ENCODE measurements at regions of chr18 and their contacts with region 1.

Region 1: DNA sequence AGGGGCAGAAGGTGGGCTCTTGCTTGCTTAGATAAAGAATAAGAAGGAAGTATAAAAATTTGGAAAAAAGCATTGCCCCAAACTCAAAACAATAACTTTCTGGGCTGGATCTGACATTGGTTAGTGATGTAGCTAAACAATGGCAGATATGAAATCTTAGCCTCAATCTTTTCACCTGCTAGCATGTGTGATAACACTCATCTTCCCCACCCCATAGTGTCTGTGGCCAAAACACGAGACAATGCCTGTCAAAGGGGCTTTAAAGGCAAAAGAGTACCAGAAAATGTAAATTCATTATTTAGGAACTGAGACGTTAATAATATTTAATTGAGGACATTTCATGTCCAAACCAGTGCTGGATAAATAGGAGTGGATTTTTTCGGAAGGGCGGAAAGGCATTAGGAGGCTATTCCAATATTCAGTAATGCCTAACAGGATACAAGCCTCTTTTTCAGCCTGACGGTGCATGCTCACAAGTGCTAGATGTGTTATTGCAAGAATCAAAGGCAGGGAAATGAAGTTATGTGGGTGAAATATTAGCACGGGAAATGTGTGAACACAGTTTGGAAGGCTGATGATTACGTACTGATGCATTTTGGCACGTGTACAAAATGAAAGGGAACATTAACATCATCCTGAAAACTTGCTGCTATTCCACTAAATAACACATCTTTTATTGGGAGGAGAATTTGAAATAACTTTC is 395.7 kb downstream of the GALR1 start:
- DNase-seq: no peak
- ATAC-seq: no peak
- H3K4me3 ChIP-seq: no peak overlapping the region
- H3K27ac ChIP-seq: no peak overlapping the region
- H3K4me1 ChIP-seq: no peaks in the 10 kb centered on the region
- H3K27me3 ChIP-seq: peaks cover 0 to 9% of the 10 kb centered on the region in 2 experiments; a peak in 1 of 5 replicates
- CTCF ChIP-seq: no peak
- EP300 ChIP-seq: no peak
- POLR2A ChIP-seq: no peak
- RAD21 ChIP-seq: no peak

Region 2: GRCh38 chr18:76658627-76659026 is 986.7 kb before region 1 on chr18:
- CTCF ChIA-PET with region 1: no interaction called
- POLR2A ChIA-PET with region 1: no interaction called
- in situ Hi-C with region 1: no loop called
- intact Hi-C with region 1: loop called (anchors 5 kb)
- DNase-seq: no peak
- ATAC-seq: peak; percentile 72
- H3K4me3 ChIP-seq: no peak overlapping the region
- H3K27ac ChIP-seq: no peak overlapping the region
- H3K4me1 ChIP-seq: no peaks in the 10 kb centered on the region
- H3K27me3 ChIP-seq: peaks cover 2 to 27% of the 10 kb centered on the region in 2 experiments; a peak in 3 of 5 replicates
- CTCF ChIP-seq: peak; percentile 52
- EP300 ChIP-seq: no peak
- POLR2A ChIP-seq: no peak
- RAD21 ChIP-seq: no peak

Region 3: DNA sequence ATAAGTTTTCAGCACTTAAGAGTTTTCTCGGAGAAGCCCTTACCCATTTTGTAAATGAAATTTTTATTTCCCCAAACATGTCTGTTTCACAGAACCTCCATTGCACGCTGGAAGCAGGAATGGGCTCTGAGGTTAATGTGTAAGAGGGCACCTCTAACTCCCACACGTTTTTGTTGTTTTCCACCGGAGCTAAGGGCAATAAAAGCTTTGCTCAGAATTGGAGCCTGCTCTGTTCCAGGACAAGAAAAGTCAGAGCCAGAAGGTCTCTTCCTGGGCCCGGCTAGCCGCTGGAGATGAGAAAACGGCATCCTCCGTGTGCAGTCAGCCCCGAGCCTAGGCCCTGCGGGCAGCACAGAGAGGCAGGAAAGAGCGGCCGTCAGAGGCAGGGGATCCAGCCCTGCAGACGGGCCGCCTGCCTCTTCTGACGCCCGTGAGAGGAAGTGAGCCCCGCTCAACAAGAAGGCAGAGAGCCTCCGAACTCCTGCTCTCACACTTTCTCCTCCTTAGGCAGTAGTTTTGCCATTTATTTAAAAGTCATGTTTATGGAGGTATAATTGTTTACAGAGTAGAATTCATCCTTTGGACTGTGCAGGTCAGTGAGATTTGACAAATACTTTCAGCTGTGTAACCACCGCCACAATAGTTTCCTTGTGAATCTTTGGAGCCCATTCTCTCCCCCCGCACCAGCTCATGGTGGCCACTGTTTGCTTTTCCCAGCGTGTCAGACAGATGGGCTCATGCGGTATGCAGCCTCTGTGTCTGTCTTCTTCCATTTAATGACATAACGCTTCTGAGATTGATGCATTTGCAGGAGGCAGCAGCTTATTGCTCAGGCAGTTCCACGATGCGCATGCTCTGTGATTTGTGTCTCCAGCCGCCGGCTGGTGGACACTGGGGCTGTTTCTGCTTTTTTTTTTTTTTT is 278.3 kb before region 1 on chr18:
- CTCF ChIA-PET with region 1: no interaction called
- POLR2A ChIA-PET with region 1: no interaction called
- in situ Hi-C with region 1: no loop called
- intact Hi-C with region 1: no loop called
- DNase-seq: peak; percentile 97
- ATAC-seq: peak; percentile 97
- H3K4me3 ChIP-seq: peak overlapping the region; percentile 28 to 62 (median 61); a peak in 5 of 6 replicates
- H3K27ac ChIP-seq: peak overlapping the region; percentile 49
- H3K4me1 ChIP-seq: peaks cover 23% of the 10 kb centered on the region
- H3K27me3 ChIP-seq: peaks cover 1 to 8% of the 10 kb centered on the region in 2 experiments; a peak in 1 of 5 replicates
- CTCF ChIP-seq: no peak
- EP300 ChIP-seq: peak in 1 of 2 experiments; percentile 61; a peak in 3 of 4 replicates
- POLR2A ChIP-seq: no peak
- RAD21 ChIP-seq: no peak

Region 4: DNA sequence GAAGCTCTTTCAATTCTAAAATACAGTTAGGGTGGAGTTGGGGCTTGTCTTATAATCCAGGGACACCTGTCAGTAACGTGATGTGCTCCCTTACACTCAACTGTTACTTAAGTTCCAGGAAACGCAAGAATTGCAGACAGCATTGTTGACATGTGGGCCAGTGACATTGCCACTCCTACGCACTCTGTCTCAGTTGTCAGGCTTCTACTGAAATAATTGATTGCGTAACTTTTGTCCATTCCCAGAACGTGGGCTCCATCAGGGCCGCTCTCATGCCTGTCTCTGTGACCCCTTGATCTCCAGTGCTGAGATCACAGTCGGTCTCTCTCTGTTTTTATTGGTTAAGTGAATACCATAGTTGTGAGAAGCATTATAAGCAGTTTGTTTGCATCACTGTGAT is 92.1 kb after region 1 on chr18:
- CTCF ChIA-PET with region 1: no interaction called
- POLR2A ChIA-PET with region 1: no interaction called
- in situ Hi-C with region 1: no loop called
- intact Hi-C with region 1: no loop called
- DNase-seq: no peak
- ATAC-seq: no peak
- H3K4me3 ChIP-seq: no peak overlapping the region
- H3K27ac ChIP-seq: no peak overlapping the region
- H3K4me1 ChIP-seq: no peaks in the 10 kb centered on the region
- H3K27me3 ChIP-seq: no peaks in the 10 kb centered on the region
- CTCF ChIP-seq: no peak
- EP300 ChIP-seq: no peak
- POLR2A ChIP-seq: no peak
- RAD21 ChIP-seq: no peak

Region 5: DNA sequence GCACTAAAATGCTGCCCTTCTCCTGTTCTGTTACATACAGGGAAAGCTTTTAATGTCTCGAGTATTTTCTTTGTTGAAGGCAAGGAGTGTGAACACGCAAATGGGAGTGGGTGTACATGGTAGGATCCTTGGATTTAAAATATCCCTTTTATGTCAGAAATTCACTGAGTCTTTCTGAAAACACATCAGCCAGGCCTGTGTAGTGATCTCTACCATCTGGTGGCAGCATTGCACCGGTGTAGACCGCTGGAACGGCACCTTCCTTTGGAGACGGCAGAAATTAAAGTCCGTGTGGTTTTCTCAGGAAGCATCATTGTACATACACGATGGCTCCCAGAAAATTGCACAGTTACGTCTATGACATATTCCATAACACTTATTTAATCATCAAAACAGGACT is 120.1 kb after region 1 on chr18:
- CTCF ChIA-PET with region 1: no interaction called
- POLR2A ChIA-PET with region 1: no interaction called
- in situ Hi-C with region 1: no loop called
- intact Hi-C with region 1: no loop called
- DNase-seq: peak; percentile 11
- ATAC-seq: peak; percentile 88
- H3K4me3 ChIP-seq: no peak overlapping the region
- H3K27ac ChIP-seq: no peak overlapping the region
- H3K4me1 ChIP-seq: no peaks in the 10 kb centered on the region
- H3K27me3 ChIP-seq: peaks cover 0 to 5% of the 10 kb centered on the region in 2 experiments; a peak in 1 of 5 replicates
- CTCF ChIP-seq: peak; percentile 71
- EP300 ChIP-seq: no peak
- POLR2A ChIP-seq: no peak
- RAD21 ChIP-seq: 0 out of 2 replicates have a peak, but pooled peaks have one; percentile 39

Measured in HepG2 (cell line).